ENCODE measurements at regions of chr4 and their contacts with region 1.

Region 1: DNA sequence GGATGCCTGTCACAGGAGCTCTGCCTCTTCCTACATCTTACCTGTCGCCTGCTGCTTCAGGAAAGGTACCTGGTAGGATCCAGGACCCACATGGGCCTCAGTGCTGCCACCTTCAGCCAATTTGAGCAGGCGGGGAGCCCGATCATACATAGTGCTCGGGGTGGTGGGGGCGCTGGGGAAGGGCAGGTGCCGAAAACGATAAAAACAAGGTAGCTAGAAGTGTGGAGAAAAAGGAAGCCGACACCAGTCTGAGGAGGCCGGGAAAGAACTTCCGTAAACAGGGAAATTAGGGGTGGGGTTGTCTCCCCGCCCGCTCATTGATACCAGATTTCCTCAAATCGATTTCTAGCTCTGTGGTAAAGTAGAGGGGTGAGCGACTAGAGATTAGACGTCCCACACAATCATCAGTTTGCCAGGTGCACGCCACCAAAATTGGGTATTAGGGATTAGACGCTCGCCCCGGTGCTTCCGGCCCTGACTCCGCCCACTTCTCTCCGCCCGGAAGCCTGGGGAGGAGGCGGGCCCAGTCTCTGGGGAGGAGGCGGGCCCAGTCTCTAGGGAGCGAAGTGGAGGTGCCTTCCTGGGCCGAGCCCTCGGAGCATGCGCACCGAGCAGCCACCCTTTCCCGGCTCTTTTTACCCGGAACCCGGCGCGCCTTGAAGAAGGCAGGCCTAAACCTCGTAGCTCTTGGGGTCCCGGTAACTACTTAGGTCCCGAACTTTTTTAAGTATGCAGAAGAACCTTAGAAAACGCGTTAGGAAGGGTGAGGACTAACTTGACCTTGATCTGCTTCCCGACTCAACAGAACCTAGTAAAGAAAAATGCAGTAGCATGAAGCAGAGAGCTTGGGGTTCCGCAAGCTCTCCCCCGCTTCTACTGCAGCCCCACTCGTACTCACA is at the start of gene STPG2:
- DNase-seq: peak; percentile 91
- H3K4me3 Mint-ChIP-seq: peak within 1 kb of the TSS; percentile 88
- H3K27ac Mint-ChIP-seq: peak within 1 kb of the TSS; percentile 93
- H3K4me1 Mint-ChIP-seq: peaks cover 18% of the 10 kb centered on the region
- H3K27me3 Mint-ChIP-seq: peaks cover 7% of the 10 kb centered on the region
- total RNA-seq, gene STPG2: not detected in 2 replicates

Region 2: GRCh38 chr4:98248934-98249333 is 105.7 kb after region 1 on chr4:
- intact Hi-C with region 1: loop called (anchors 5 kb)
- DNase-seq: no peak
- H3K4me3 Mint-ChIP-seq: no peak overlapping the region
- H3K27ac Mint-ChIP-seq: no peak overlapping the region
- H3K4me1 Mint-ChIP-seq: peaks cover 18% of the 10 kb centered on the region
- H3K27me3 Mint-ChIP-seq: peaks cover 9% of the 10 kb centered on the region

Region 3: GRCh38 chr4:98446499-98447375 is 303.5 kb after region 1 on chr4:
- intact Hi-C with region 1: loop called (anchors 1 kb)
- DNase-seq: peak; percentile 44
- H3K4me3 Mint-ChIP-seq: peak overlapping the region; percentile 67
- H3K27ac Mint-ChIP-seq: peak overlapping the region; percentile 90
- H3K4me1 Mint-ChIP-seq: peaks cover 43% of the 10 kb centered on the region
- H3K27me3 Mint-ChIP-seq: peaks cover 3% of the 10 kb centered on the region

Region 4: DNA sequence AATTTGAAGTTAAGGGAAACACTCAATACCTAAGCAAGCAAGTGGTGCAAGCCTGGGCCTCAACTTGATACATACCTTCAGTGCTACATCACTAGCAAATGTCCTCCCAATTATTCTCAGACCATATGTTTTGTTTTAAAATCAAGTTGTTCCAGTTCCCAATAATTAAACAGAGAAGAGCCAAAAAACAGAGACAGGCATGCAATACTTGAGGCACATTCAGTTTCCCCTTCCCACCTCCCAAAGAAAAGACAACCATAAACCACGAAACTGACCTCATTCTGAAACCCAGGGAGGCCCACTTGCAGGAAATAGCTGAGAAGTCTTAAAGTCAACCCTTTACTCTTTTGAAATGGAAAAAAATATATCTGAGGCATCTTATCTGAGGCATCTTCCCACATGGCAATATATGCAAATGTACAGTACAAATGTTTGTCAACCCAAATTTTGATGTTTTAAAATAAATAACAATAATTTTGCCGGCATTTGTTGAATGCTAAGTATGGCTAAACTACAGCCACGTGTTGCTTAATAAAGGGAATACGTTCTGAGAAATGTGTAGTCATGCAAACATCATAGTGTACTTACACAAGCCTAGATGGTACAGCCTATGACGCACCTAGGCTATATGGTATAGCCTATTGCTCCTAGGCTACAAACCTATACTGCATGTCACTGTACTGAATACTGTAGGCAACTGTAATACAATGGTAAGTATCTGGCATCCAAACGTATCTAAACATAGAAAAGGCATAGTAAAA is 367.7 kb after region 1 on chr4:
- intact Hi-C with region 1: no loop called
- DNase-seq: peak; percentile 34
- H3K4me3 Mint-ChIP-seq: peak overlapping the region; percentile 47
- H3K27ac Mint-ChIP-seq: peak overlapping the region; percentile 83
- H3K4me1 Mint-ChIP-seq: peaks cover 85% of the 10 kb centered on the region
- H3K27me3 Mint-ChIP-seq: no peaks in the 10 kb centered on the region

Region 5: GRCh38 chr4:99054428-99054994 is 911.3 kb after region 1 on chr4:
- intact Hi-C with region 1: loop called (anchors 2 kb)
- DNase-seq: no peak
- H3K4me3 Mint-ChIP-seq: no peak overlapping the region
- H3K27ac Mint-ChIP-seq: peak overlapping the region; percentile 7
- H3K4me1 Mint-ChIP-seq: peaks cover 49% of the 10 kb centered on the region
- H3K27me3 Mint-ChIP-seq: no peaks in the 10 kb centered on the region

Region 6: DNA sequence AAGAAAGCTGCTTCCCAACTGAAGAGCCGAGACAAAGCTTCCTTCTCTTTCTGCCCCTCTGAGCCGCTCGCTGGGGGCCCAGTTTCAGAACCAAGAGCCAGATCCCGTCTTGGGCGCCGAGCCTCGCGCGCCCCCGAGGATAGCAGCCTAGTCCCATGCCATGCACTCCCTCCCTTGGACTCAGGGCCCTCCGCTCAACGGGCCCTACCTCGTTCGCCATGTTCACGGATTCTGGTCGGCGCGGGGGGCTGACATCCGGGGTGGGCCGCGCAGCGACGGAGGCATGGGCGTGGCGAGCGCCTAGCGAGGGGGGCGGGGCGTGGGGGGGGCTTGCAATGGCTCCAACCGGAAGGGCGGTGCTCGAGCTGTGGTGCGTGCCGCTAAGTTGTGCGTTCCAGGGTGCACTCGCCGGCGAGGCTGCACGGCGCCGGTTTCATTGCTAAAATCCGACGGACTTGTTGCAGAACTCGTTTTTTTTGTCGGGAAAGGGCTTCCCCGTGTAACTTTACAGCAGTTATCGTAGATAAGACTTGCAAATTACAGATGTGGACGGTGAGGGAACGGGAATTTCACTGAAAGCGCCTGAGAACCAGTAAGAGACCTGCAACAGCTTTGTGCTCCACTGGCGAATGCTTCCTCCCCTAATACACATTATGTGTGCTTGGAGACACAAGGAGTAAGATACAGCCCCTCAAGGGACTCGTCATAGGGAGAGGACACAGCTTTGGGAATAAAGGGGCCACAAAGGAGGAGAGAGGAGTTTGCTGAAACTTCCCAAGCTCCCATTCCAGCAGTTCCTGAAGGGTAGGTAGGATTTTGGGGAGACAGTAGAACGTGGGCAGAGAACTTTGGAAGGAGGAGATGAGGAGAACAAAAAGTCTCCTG is 945.5 kb after region 1 on chr4 and contains the start of gene ADH5:
- intact Hi-C with region 1: loop called (anchors 1 kb)
- DNase-seq: peak; percentile 77
- H3K4me3 Mint-ChIP-seq: peak within 1 kb of the TSS; percentile 98
- H3K27ac Mint-ChIP-seq: peak within 1 kb of the TSS; percentile 98
- H3K4me1 Mint-ChIP-seq: peaks cover 50% of the 10 kb centered on the region
- H3K27me3 Mint-ChIP-seq: peaks cover 2% of the 10 kb centered on the region
- total RNA-seq, gene ADH5: 68.8 and 74.9 TPM in 2 replicates

Region 7: DNA sequence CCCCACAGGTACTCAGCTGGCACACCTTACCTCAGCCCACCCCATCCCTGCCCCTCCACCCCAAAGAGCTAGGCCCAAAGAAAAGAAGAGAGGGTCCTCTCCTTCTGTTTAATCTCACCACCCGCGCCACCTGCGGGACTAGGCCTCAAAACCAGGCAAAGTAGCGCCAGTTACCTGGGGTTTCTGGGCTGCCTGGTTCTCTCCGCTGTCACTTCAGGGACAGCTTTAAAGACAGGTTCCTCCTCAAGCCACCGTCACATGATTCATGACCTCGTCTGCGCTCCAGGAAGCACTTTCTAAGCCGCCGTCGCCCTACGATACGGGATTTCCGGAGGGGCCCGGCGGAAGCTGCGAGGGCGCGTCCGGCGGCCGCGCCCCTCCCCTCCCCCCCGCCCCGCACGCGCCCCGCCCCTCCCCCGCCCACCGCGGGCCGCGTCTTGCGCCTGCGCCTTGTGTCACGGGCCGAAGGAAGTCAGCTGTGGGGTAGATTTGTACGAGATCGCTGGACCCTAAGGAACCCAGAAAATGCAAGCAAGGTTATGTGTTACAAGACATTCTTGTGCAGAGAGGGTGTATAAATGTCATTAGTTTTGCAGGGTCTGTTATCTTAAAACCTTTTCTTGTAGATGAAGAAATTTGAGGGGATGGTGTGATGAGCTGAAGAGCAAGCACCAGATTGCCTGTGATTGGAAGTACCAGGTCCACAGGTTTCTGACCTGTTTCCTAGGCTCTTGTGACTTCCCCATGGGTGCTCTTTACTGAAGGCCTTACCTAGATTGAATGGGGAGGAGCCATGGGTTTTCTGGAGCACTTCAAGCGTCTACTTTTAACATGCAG is 1751.1 kb after region 1 on chr4 and contains the start of gene LAMTOR3:
- intact Hi-C with region 1: loop called (anchors 5 kb)
- DNase-seq: peak; percentile 87
- H3K4me3 Mint-ChIP-seq: peak within 1 kb of the TSS; percentile 97
- H3K27ac Mint-ChIP-seq: peak within 1 kb of the TSS; percentile 95
- H3K4me1 Mint-ChIP-seq: peaks cover 42% of the 10 kb centered on the region
- H3K27me3 Mint-ChIP-seq: no peaks in the 10 kb centered on the region
- total RNA-seq, gene LAMTOR3: 28.6 and 29.7 TPM in 2 replicates